Activated T-helper 2 cell treated with anti-CD3 and anti-CD28 coated beads, Interferon-gamma antibody, Interleukin-2, Interleukin-4, amounts not matched to agents 10 μg/mL and 5 μg/mL and 100 μg/mL, durations not matched to agents 14 hours and 24 hours and 36 hours (primary cell): ENCODE measurements at regions of chr6 and their contacts with region 1.

Region 1: GRCh38 chr6:31546962-31547726 is at the start of gene NFKBIL1:
- DNase-seq: peak; percentile 90
- H3K4me3 Mint-ChIP-seq: peak within 1 kb of the TSS; percentile 84
- H3K27ac Mint-ChIP-seq: peak within 1 kb of the TSS; percentile 78
- H3K4me1 Mint-ChIP-seq: peaks cover 28% of the 10 kb centered on the region
- H3K27me3 Mint-ChIP-seq: no peaks in the 10 kb centered on the region
- total RNA-seq, gene NFKBIL1: 15.7 and 17.6 TPM in 2 replicates

Region 2: DNA sequence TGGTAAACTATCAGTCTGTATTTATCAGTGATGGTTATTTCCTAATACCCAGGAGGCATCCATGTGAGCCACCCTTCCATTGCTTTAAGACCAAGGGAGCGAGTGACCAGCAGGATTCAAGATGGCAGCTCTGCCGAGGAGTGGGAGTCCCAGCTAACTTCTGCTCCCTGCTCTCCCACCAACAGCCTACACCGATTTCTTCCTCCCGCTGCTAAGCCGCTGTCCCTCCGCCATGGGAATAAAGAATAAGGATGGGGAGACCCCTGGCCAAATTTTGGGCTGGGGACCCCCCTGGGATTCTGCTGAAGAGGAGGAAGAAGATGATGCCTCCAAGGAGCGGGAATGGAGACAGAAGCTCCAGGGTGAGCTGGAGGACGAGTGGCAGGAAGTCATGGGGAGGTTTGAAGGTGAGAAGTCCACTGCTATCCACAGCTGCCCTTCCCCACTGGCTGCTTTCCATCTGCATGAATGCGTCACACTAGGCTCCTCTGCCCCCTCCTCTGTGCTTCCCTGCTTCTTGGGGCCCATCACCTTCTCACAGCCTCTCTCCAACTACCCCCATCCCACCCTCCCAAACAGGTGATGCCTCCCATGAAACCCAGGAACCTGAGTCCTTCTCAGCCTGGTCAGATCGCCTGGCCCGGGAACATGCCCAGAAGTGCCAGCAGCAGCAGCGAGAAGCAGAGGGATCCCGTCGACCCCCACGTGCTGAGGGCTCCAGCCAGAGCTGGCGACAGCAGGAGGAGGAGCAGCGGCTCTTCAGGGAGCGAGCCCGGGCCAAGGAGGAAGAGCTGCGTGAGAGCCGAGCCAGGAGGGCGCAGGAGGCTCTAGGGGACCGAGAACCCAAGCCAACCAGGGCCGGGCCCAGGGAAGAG is 10.5 kb after region 1 on chr6:
- intact Hi-C with region 1: no loop called
- DNase-seq: no peak
- H3K4me3 Mint-ChIP-seq: no peak overlapping the region
- H3K27ac Mint-ChIP-seq: no peak overlapping the region
- H3K4me1 Mint-ChIP-seq: peaks cover 52% of the 10 kb centered on the region
- H3K27me3 Mint-ChIP-seq: no peaks in the 10 kb centered on the region

Region 3: DNA sequence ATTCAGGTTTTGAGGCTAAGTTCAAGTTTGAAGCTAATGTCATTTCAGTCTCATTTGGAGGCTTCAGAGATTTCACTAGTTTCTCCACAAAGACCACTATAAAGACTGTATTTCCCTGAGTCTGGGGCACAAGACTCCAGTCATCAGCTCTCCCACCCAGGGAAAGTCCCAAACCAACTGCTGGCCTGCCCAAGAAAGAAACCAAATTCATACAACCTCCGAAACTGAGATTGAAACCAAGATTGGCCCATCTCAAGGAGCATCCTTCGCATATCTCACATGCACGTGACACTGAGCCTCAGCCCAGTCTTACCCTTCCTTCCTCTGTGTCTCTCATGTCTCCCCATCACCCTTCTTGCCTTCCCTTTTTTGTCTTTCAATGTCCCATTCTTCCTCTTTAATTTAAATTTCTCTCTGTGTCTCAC is 21.4 kb after region 1 on chr6:
- intact Hi-C with region 1: loop called (anchors 1 kb)
- DNase-seq: peak; percentile 78
- H3K4me3 Mint-ChIP-seq: peak overlapping the region; percentile 64
- H3K27ac Mint-ChIP-seq: peak overlapping the region; percentile 86
- H3K4me1 Mint-ChIP-seq: peaks cover 65% of the 10 kb centered on the region
- H3K27me3 Mint-ChIP-seq: peaks cover 18% of the 10 kb centered on the region

Region 4: GRCh38 chr6:31580807-31581433 is 33.8 kb after region 1 on chr6:
- intact Hi-C with region 1: loop called (anchors 1 kb)
- DNase-seq: peak; percentile 80
- H3K4me3 Mint-ChIP-seq: peak overlapping the region; percentile 97
- H3K27ac Mint-ChIP-seq: peak overlapping the region; percentile 89
- H3K4me1 Mint-ChIP-seq: peaks cover 57% of the 10 kb centered on the region
- H3K27me3 Mint-ChIP-seq: no peaks in the 10 kb centered on the region

Region 5: GRCh38 chr6:31597006-31597405 is 49.9 kb after region 1 on chr6:
- intact Hi-C with region 1: loop called (anchors 1 kb)
- DNase-seq: no peak
- H3K4me3 Mint-ChIP-seq: no peak overlapping the region
- H3K27ac Mint-ChIP-seq: no peak overlapping the region
- H3K4me1 Mint-ChIP-seq: peaks cover 29% of the 10 kb centered on the region
- H3K27me3 Mint-ChIP-seq: no peaks in the 10 kb centered on the region

Region 6: DNA sequence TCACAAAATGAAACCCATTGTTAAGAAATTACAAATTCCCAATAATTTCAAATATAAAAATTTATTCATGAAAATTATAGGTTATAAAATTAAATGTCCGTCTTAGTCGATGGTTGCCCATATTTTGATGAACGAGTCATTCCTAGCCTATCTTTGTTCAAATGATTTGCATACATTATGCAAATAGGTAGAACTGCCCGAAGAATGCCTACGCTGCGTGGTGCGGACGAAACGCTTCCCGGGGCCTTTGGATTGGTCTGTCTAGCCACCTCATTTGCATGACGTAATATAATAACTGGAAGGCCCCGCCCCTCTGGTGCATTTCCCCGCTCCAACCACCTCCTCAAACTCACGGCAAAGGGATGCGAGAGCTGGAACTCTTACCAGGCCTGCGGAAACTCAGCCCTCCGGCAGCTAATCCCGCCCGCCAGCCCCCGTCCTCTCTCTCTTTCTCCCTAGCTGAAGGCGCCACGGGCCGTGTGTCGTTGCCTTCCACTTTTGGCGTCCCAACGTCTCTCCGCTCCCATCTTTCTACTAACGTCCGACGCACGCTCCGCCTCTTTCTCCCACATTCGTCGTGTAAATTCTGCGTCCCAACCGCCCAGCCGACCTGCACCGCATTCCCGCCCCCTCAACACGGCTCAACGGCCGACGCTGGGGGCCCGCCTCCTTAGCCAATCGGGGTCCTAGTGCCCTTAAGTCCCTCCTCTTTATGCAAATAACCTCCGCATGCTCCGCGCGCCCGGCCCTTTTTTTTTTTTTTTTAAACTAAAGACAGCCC is 72.9 kb after region 1 on chr6:
- intact Hi-C with region 1: loop called (anchors 1 kb)
- DNase-seq: peak; percentile 98
- H3K4me3 Mint-ChIP-seq: peak overlapping the region; percentile 81
- H3K27ac Mint-ChIP-seq: peak overlapping the region; percentile 94
- H3K4me1 Mint-ChIP-seq: peaks cover 39% of the 10 kb centered on the region
- H3K27me3 Mint-ChIP-seq: no peaks in the 10 kb centered on the region

Region 7: GRCh38 chr6:31712296-31712695 is 165.2 kb after region 1 on chr6:
- intact Hi-C with region 1: no loop called
- DNase-seq: no peak
- H3K4me3 Mint-ChIP-seq: no peak overlapping the region
- H3K27ac Mint-ChIP-seq: no peak overlapping the region
- H3K4me1 Mint-ChIP-seq: peaks cover 9% of the 10 kb centered on the region
- H3K27me3 Mint-ChIP-seq: peaks cover 9% of the 10 kb centered on the region